Right ventricle myocardium superior (tissue), 1 donor: ENCODE measurements at regions of chr13 and their contacts with region 1.

Region 1: DNA sequence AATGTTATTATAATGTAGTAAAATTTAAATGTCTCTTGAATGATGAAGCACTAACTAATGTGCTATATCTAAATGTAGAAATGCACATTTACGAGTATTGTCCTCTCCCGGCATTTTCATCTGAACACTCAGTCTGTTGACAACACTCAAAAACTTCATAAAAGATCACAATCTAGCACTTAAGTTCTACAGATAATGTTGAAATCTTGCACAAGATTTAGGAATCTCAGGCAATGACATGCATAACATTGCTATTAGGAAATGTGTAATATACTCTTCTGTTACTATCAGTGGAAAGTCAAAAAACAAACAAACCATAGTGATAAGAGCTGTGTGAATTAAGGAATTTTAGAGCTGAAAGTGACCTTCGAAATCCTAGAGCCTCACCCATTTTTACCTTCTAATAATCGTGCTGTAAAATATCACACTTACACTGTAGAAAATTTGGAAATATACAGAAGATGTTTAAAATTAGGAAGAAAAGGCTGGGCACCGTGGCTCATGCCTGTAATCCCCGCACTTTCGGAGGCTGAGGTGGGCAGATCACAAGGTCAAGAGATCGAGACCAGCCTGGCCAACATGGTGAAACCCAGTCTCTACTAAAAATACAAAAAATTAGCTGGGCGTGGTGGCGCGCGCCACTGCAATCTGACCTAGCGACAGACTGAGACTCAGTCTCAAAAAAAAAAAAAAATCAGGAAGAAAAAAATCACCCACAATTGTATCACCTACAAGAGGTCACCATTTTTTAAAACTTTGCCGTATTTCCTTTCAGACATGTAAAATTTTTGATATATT is 37.7 kb upstream of the XPO4 start:
- DNase-seq: no peak
- ATAC-seq: no peak

Region 2: DNA sequence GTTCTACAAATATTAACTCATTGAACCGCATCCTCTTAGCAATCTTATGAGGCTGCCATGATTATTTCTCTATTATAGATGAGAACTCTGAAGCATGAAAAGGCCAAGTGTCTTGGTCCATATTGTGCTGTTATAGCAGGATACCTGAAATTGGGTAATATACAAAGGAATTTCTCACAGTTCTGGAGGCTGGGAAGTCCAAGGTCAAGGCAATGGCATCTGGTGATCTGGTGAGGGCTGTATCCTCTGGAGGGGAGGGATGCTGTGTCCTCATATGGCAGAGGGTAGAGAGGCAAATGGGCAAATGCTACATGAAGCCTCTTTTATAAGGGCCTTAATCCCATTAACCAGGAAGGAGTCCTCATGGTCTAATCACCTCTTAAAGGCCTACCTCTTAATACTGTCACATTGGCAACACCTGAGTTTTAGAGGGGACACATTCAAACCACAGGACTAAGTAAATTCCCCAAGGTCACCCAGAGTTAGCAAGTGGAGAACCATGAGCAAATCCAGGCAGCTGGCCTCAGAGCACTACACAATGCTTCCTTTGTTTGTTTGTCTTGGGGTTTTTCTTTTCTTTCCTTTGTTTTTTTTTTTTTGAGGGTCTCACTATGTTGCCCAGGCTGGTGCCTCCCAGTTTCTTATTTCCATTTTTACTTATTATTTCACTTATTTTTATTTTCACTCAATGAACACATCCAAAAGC is 177.0 kb after region 1 on chr13:
- intact Hi-C with region 1: no loop called
- DNase-seq: no peak
- ATAC-seq: no peak

Region 3: GRCh38 chr13:21130116-21130515 is 189.8 kb after region 1 on chr13:
- intact Hi-C with region 1: loop called (anchors 5 kb)
- DNase-seq: no peak
- ATAC-seq: no peak

Region 4: GRCh38 chr13:21176220-21176982 is 236.1 kb after region 1 on chr13 and contains the starts of genes MRPL57 and SKA3:
- intact Hi-C with region 1: loop called (anchors 5 kb)
- DNase-seq: peak; percentile 95
- ATAC-seq: peak; percentile 99
- total RNA-seq, gene MRPL57: 20.2 TPM
- total RNA-seq, gene SKA3: 0.32 TPM